Right ventricle myocardium inferior (tissue), 1 donor: ENCODE measurements at regions of chr1 and their contacts with region 1.

Region 1: GRCh38 chr1:114195819-114196218 is 42.1 kb upstream of the SYT6 start:
- DNase-seq: no peak
- ATAC-seq: no peak

Region 2: DNA sequence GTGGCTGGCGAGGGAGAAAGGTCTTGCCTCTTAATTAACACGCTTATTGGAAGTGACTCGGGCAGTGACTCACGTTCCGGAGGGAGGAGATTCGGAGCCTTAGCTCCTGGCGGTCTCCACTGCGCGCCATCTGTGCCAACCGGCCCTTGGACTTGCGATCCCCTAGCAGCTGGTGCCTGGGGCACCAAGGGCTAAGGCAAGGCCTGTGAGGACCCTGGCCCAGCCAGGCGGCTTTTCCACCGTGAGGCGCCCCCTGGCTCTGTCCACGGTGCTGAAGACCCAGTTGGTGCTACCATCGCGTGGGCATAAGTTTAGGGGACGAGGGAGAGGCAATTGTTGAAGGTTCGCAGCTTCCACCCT is 40.9 kb before region 1 on chr1:
- intact Hi-C with region 1: loop called (anchors 5 kb)
- DNase-seq: no peak
- ATAC-seq: no peak

Region 3: GRCh38 chr1:114299331-114299975 is 103.6 kb after region 1 on chr1:
- intact Hi-C with region 1: no loop called
- DNase-seq: no peak
- ATAC-seq: no peak